ENCODE measurements at regions of chr14 and their contacts with region 1.

Region 1: DNA sequence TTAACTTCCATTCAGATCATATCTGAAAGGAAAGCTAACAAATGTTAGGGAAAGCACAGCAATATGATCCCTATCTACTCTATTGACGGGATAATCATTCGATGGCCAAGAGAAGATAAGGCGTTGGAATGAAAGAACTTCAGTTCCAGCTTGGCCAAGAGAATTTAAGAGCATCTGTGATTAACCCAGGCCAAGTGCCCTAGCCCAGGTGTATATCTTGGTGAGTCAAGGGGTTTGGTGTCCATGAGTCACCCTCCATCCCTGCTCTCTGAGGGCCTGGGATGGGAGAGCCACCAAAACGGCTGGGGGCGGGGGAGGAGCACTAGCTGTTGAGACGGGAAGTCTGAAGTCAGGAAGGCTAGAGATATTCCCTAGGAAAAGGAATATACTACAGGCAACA is 13.0 kb downstream of the TBPL2 start:
- DNase-seq: no peak

Region 2: DNA sequence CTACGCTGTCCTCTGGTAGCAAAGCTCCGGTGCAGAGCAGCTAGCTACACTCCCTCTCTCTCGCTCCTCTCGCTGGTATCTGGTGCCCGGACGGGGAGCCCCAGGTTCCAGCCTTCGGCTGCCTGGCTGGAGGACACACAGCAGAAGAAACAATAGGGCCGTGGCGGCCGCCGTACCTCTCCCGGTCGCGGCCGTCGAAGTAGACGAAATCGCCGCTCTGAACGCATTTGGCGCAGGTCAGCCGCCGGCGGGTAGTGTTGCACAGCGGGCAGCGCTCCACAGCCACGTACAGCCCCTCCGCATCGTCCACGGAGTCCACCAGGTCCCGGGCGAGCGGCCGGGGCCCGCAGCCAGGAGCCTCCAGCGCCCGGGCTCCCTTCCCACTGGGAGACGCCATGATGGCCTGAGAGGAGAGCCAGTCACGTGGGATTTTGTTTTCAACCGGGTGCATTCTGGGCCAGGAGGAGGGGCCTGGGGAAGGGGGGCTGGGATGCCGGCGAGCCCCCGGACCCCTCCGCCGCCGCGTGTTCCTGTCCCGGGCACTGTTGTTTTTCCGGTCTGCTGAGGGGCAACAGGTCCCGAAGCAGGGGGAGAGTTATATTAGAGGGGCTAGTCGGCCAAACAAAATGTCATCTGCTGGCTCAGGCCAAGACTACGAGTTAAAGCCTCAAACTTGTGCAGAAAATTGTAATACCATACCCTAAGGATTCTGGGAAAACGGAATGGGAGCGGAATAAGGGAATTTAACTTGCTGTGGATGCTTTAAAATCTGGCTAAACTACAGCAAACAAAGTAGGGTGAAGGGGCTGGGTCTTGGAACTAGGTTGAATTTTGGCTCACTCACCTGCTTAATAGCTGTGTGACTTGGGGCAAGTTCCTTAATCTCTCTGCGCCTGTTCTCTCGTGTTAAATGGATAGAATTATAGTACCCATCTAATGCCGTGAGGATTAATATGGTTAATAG is 15.7 kb before region 1 on chr14 and contains the start of gene ATG14:
- CTCF ChIA-PET with region 1: interaction called, 13 read pairs
- POLR2A ChIA-PET with region 1: interaction called, 11 read pairs
- DNase-seq: peak; percentile 93

Region 3: DNA sequence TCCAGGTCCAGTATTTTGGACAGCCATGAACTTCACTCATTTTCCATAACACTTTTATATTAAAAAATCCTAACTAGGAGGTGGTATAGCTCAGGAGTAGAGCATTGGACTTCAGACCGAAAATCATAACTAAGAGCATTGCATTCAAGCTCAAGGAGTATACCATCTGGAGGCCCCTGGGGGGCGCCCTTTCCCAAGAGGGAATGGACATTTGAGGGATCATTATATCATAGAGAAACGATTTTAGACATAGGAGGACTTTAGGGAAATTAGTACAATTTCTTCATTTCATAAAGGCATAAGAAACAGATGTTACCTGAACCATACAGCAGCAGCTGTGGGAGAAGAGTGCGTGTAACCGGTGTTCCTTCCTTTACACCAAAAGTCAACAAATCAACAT is 10.5 kb before region 1 on chr14:
- CTCF ChIA-PET with region 1: interaction called, 13 read pairs
- POLR2A ChIA-PET with region 1: interaction called, 11 read pairs
- DNase-seq: peak; percentile 30

Region 4: DNA sequence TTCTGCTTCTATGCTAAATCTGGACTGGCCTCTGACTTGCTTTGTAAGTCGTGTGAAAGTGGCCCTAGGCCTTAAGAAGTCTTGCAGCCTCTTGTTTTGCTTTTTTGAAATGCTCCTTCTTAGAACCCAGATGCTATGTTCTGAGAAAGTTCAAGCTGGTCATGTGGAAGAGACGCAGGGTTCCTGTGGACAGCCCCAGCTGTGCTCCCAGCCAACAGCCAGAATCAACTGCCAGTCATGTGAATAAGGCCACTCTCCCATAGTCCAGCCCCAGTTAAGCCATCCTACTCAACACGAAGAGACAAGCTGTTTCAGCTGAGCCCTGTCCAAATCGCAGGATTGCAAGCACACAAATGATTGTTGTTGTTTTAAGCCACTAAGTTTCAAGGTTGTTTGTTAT is 50.3 kb after region 1 on chr14:
- CTCF ChIA-PET with region 1: no interaction called
- POLR2A ChIA-PET with region 1: no interaction called
- DNase-seq: no peak

Region 5: DNA sequence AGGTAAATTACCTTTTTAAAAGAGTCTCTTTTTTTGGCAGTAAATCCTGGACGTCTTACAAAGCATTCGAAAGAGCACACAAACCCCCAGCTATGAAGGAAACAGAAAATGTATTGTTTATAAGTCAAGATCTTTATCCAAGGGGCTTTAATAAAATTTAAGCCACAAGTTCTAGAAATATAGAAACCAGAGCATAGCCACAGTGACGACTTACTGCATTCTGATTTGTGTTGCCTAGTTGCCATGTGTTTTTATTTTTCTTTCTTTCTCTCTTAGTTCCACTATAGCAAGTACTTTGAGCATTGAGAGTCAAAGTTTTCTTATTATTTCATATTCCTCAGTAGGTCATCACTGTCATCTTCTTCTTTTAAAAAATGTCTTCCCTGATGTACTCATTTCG is 60.8 kb after region 1 on chr14:
- CTCF ChIA-PET with region 1: no interaction called
- POLR2A ChIA-PET with region 1: no interaction called
- DNase-seq: no peak

Region 6: GRCh38 chr14:55579724-55580469 is 152.5 kb after region 1 on chr14 and contains the start of gene KTN1:
- CTCF ChIA-PET with region 1: no interaction called
- POLR2A ChIA-PET with region 1: no interaction called
- DNase-seq: peak; percentile 81